Esophagus muscularis mucosa (tissue), 4 donors: ENCODE measurements at regions of chr9 and their contacts with region 1.

Region 1: DNA sequence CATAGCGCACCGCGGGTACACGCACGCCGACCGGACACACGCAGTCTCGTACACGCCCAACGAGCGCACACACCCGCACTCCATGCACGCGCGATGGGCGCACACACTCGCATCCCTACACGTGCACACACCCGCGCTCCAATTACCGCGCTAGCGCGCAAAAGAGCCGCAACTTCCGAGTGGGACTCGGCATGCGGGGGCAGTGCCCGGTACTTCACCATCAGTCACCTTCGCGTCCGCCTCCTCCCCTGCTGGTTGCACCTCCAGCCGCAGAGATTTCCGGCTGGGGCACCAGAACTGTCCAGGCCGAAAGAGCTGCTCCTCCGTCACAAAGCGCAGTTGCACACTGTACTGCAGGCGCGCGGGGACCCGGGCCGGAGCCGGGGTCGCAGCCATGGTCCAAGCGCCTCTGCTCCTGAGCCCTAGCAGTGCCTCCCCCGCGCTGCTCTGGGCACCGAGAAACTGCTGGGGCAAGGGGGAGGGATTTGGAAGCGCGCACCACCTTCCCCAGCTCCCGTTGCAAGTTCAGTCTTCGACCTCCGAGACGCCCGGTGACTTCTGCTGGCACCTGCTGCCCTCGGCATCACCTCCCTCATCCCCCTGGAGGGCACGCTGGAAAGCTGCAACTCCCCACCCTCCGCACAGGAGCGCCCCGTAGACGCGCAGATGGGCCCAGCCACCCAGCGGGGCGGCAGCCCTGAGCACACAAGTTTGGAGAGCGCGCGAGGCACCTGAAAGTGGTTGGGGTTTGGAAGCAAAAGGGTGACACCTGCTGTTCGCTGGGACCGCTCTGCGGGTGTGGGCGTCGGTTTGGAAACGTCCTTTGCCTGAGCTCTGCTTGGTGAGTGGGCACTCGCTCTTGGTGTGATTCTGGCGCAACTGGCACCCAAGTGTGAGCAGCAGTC is 337.4 kb upstream of the PUM3 start:
- DNase-seq: peak; percentile 88
- H3K4me3 ChIP-seq: peak overlapping the region; percentile 39 to 52 (median 46)
- H3K27ac ChIP-seq: no peak overlapping the region
- H3K4me1 ChIP-seq: peaks cover 2 to 15% (median 14%) of the 10 kb centered on the region in 4 donors
- H3K27me3 ChIP-seq: peaks cover 0 to 22% (median 0%) of the 10 kb centered on the region in 4 donors
- CTCF ChIP-seq: peak; percentile 29 to 49 (median 34)
- EP300 ChIP-seq: no peak
- POLR2A ChIP-seq: no peak

Region 2: DNA sequence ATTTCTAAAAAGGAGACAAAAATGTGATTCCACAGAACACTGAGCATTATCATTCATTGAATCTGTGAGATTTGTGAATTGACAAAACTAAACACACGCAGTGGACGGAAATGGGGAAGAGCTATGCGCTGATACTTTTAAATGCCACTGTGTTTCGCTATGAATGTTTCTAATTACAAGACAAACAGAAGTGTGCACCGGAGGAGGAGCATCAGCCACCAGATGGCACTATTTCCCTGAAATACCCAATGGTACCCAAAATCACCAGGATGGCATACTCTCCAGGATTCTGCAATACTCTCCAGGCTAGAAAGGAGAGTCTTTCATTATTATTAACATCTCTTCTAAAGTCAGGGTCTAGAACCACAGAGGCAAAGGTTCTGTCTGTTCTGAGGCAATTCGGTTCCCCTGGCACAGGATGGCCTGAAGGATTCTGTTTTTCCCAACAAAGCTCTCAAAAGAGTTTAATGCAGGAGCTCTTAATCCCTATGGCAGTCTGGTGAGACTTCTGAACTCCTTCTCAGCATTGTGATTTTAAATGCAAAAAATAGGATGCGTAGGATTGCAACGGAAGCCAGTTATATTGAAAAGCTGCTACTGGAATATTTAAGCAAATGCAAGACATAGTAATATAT is 323.6 kb before region 1 on chr9:
- intact Hi-C with region 1: loop called (anchors 5 kb)
- DNase-seq: peak; percentile 86
- H3K4me3 ChIP-seq: no peak overlapping the region
- H3K27ac ChIP-seq: no peak overlapping the region
- H3K4me1 ChIP-seq: no peaks in the 10 kb centered on the region
- H3K27me3 ChIP-seq: peaks cover 0 to 13% (median 0%) of the 10 kb centered on the region in 4 donors
- CTCF ChIP-seq: peak; percentile 69 to 82 (median 78)
- EP300 ChIP-seq: no peak
- POLR2A ChIP-seq: no peak

Region 3: GRCh38 chr9:2872257-2872935 is 308.9 kb before region 1 on chr9:
- intact Hi-C with region 1: loop called (anchors 5 kb)
- DNase-seq: no peak
- H3K4me3 ChIP-seq: no peak overlapping the region
- H3K27ac ChIP-seq: no peak overlapping the region
- H3K4me1 ChIP-seq: no peaks in the 10 kb centered on the region
- H3K27me3 ChIP-seq: peaks cover 0 to 11% (median 0%) of the 10 kb centered on the region in 4 donors
- CTCF ChIP-seq: peak; percentile 37 to 44 (median 40)
- EP300 ChIP-seq: no peak
- POLR2A ChIP-seq: no peak

Region 4: GRCh38 chr9:3088166-3088702 is 93.1 kb before region 1 on chr9:
- intact Hi-C with region 1: no loop called
- DNase-seq: no peak
- H3K4me3 ChIP-seq: no peak overlapping the region
- H3K27ac ChIP-seq: no peak overlapping the region
- H3K4me1 ChIP-seq: no peaks in the 10 kb centered on the region
- H3K27me3 ChIP-seq: no peaks in the 10 kb centered on the region
- CTCF ChIP-seq: no peak
- EP300 ChIP-seq: no peak
- POLR2A ChIP-seq: no peak